ENCODE measurements at regions of chr7 and their contacts with region 1.

Region 1: DNA sequence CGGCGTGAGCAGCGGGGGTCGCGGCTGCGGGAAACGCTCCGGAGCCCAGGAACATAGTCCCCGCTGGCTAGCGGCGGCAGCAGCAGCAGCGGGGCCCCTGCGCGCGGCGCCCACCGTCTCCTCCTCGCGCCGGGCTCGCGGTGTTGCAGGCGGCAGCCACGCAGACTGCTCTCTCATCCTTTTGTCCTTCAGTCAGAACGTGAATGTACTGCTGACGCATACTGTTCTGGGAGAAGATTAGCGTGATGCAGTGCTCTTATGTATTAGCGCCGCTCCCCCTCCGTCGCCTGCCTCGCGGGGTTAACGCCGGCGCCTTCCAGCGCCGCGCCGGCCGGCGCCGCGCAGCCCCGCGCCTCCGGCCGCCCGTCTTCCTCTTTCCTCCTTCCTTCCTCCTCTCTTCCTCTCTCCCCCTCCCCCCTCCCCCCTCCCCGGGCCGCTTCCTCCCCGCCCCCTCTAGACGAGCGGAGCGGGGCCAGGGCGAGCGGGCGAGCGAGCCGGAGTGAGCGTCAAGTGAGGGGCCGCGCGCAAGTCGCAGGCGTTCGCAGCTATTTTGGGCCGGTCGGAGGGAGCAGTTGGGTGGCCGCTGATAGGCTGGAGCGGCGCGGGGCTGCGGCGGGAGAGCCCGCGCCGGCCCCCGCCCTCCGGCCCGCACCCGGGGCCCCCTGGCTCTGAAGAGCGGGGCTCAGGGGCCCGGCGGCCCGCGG is 816 bp upstream of the LRRC4 start:
- DNase-seq: peak; percentile 36 to 77 (median 55)
- ATAC-seq: peak; percentile 59 to 84 (median 78)
- H3K4me3 ChIP-seq: peak overlapping the region; percentile 34 to 79 (median 60)
- H3K27ac ChIP-seq: peak overlapping the region in 7 of 12 donors; percentile 27 to 66 (median 42)
- H3K4me1 ChIP-seq: peaks cover 0 to 42% (median 12%) of the 10 kb centered on the region in 12 donors
- H3K27me3 ChIP-seq: no peaks in the 10 kb centered on the region
- CTCF ChIP-seq: peak in 6 of 12 donors; percentile 12 to 49 (median 28)
- POLR2A ChIP-seq: no peak

Region 2: DNA sequence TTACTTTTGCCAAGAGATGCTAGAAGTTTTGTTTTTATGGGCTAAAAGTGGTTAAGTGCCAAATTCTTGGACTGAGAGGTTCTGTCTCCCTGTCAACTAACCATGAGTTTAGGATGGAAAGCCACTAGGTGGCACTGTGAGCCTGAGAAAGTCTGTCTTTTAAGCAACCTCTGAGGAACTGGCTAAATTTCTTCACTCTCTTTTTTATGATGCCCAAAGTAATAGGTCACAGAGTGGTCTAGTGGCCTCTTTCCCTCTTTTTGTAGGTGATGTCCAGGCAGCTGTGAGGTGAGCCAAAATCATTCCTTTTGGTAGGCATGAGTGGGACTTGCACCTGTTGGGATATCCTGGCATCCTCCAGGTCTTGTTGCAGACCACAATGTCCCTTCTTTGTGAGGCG is 323.3 kb before region 1 on chr7:
- intact Hi-C with region 1: loop called in 8 of 10 experiments (anchors 5 to 10 kb)
- DNase-seq: peak in 4 of 5 donors; percentile 57 to 73 (median 70)
- ATAC-seq: peak; percentile 27 to 86 (median 84)
- H3K4me3 ChIP-seq: no peak overlapping the region
- H3K27ac ChIP-seq: no peak overlapping the region
- H3K4me1 ChIP-seq: peaks cover 0 to 7% (median 0%) of the 10 kb centered on the region in 12 donors
- H3K27me3 ChIP-seq: no peaks in the 10 kb centered on the region
- CTCF ChIP-seq: peak; percentile 52 to 90 (median 80)
- POLR2A ChIP-seq: no peak

Region 3: GRCh38 chr7:127717502-127718339 is 314.3 kb before region 1 on chr7:
- intact Hi-C with region 1: loop called in 3 of 10 experiments (anchors 5 to 10 kb)
- DNase-seq: no peak
- ATAC-seq: no peak
- H3K4me3 ChIP-seq: no peak overlapping the region
- H3K27ac ChIP-seq: no peak overlapping the region
- H3K4me1 ChIP-seq: peaks cover 0 to 17% (median 0%) of the 10 kb centered on the region in 12 donors
- H3K27me3 ChIP-seq: no peaks in the 10 kb centered on the region
- CTCF ChIP-seq: no peak
- POLR2A ChIP-seq: no peak

Region 4: DNA sequence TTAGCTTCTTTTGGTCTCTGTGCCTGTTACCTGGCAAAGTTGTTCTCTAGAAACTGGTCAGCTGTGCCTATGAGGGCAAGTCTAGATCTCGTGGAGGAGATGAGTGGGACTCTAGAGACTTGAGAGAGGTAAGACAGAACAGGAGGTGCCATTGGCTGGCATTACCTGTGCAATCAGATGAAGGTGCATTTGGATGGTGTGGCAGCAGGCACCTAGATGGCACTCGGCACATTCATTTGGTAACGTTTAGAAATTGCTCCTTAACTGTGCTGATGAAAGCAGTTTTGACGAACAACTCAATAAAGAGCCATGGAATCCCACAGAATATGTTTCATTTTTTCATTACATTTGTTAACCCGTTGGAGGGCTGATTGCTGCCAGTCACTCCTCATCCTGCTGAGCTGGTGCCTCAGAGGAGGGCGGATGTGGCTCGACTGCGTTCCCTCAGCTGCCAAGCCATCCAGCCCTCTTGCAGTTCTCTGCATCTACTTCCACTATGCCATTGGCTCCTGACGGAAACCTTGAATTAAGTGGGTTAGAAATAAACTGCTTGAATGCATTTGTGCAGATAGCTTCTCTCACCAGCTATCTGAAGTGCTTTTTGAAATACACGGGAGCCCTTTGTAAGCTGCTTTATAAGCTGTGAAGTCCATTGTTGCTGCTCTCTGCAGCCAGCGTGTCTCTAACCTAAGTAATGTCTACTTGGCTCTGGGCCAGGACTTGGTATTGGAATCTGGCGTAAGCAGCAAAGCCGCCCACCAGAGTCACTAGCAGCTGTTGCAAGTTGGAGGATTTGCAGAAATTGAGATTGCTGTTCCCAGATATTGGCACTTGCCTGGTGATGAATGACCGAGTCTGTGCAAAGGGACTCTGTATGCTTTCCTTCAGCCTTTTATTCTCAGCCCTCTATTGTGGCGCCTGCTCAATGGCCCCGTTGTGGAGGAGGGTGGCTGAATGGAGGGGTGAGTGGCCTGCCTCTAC is 88.2 kb before region 1 on chr7:
- intact Hi-C with region 1: loop called in 1 of 10 experiments (anchors 5 kb)
- DNase-seq: peak in 4 of 5 donors; percentile 23 to 36 (median 31)
- ATAC-seq: peak in 2 of 4 donors; percentile 24 to 59
- H3K4me3 ChIP-seq: no peak overlapping the region
- H3K27ac ChIP-seq: no peak overlapping the region
- H3K4me1 ChIP-seq: peaks cover 0 to 17% (median 0%) of the 10 kb centered on the region in 12 donors
- H3K27me3 ChIP-seq: no peaks in the 10 kb centered on the region
- CTCF ChIP-seq: no peak
- POLR2A ChIP-seq: no peak

Region 5: GRCh38 chr7:127983804-127984332 is 48.2 kb before region 1 on chr7:
- intact Hi-C with region 1: no loop called
- DNase-seq: no peak
- ATAC-seq: peak in 3 of 4 donors; percentile 19 to 59 (median 23)
- H3K4me3 ChIP-seq: no peak overlapping the region
- H3K27ac ChIP-seq: peak overlapping the region in 2 of 12 donors; percentile 1 to 55
- H3K4me1 ChIP-seq: peaks cover 0 to 35% (median 18%) of the 10 kb centered on the region in 12 donors
- H3K27me3 ChIP-seq: no peaks in the 10 kb centered on the region
- CTCF ChIP-seq: no peak
- POLR2A ChIP-seq: no peak

Region 6: GRCh38 chr7:127997226-127997922 is 34.7 kb before region 1 on chr7:
- intact Hi-C with region 1: loop called in 1 of 10 experiments (anchors 2 kb)
- DNase-seq: no peak
- ATAC-seq: no peak
- H3K4me3 ChIP-seq: no peak overlapping the region
- H3K27ac ChIP-seq: no peak overlapping the region
- H3K4me1 ChIP-seq: peaks cover 0 to 67% (median 42%) of the 10 kb centered on the region in 12 donors
- H3K27me3 ChIP-seq: no peaks in the 10 kb centered on the region
- CTCF ChIP-seq: no peak
- POLR2A ChIP-seq: no peak

Region 7: DNA sequence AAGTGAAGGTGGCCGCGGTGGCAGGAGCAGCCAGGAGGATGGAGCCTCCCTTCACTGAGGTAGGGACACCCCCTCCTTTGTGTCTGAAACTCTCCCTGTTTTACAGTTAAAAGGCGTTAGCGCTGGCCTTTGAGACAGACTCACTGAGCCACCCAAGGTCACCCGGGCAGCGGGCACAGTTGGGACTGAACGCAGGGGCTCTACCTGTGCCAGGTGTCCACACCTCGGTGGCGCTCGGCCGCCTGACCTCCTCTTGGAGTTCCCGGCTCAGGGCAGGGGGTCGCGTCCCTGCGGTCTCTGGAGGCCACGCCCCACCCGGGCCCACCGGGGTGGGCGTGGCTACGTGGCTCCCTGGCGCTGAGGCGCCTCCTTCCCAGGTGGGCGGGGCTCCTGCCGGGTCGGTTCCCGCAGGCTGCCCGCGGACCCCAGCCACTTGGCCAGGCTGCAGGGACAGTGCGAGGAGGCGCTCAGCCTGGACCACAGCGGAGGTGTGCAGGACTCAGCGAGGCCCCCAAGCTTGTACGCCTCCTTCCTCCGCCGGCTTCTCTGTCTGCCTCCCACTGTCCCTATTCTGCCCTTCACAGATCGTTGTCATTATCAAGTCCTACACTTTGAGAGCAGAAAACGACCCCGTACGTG is 169.1 kb after region 1 on chr7:
- intact Hi-C with region 1: loop called in 5 of 10 experiments (anchors 5 to 10 kb)
- DNase-seq: no peak
- ATAC-seq: no peak
- H3K4me3 ChIP-seq: peak overlapping the region in 6 of 12 donors; percentile 1 to 34 (median 14)
- H3K27ac ChIP-seq: no peak overlapping the region
- H3K4me1 ChIP-seq: peaks cover 0 to 19% (median 5%) of the 10 kb centered on the region in 12 donors
- H3K27me3 ChIP-seq: peaks cover 7 to 75% (median 24%) of the 10 kb centered on the region in 9 donors
- CTCF ChIP-seq: no peak
- POLR2A ChIP-seq: no peak

Region 8: GRCh38 chr7:128209229-128210035 is 177.4 kb after region 1 on chr7:
- intact Hi-C with region 1: loop called in 8 of 10 experiments (anchors 2 to 10 kb)
- DNase-seq: peak; percentile 53 to 74 (median 59)
- ATAC-seq: peak; percentile 76 to 84 (median 82)
- H3K4me3 ChIP-seq: no peak overlapping the region
- H3K27ac ChIP-seq: no peak overlapping the region
- H3K4me1 ChIP-seq: peaks cover 0 to 2% (median 0%) of the 10 kb centered on the region in 12 donors
- H3K27me3 ChIP-seq: peaks cover 0 to 62% (median 17%) of the 10 kb centered on the region in 9 donors
- CTCF ChIP-seq: peak; percentile 96 to 99 (median 97)
- POLR2A ChIP-seq: no peak

Measured in heart left ventricle (tissue), 16 donors.